ENCODE measurements at regions of chr10 and their contacts with region 1.

Region 1: GRCh38 chr10:51389415-51390321 is 309.7 kb downstream of the CSTF2T start:
- DNase-seq: peak; percentile 64
- H3K4me3 Mint-ChIP-seq: no peak overlapping the region
- H3K27ac Mint-ChIP-seq: no peak overlapping the region
- H3K4me1 Mint-ChIP-seq: peaks cover 19% of the 10 kb centered on the region
- H3K27me3 Mint-ChIP-seq: no peaks in the 10 kb centered on the region
- CTCF ChIP-seq: peak; percentile 72

Region 2: DNA sequence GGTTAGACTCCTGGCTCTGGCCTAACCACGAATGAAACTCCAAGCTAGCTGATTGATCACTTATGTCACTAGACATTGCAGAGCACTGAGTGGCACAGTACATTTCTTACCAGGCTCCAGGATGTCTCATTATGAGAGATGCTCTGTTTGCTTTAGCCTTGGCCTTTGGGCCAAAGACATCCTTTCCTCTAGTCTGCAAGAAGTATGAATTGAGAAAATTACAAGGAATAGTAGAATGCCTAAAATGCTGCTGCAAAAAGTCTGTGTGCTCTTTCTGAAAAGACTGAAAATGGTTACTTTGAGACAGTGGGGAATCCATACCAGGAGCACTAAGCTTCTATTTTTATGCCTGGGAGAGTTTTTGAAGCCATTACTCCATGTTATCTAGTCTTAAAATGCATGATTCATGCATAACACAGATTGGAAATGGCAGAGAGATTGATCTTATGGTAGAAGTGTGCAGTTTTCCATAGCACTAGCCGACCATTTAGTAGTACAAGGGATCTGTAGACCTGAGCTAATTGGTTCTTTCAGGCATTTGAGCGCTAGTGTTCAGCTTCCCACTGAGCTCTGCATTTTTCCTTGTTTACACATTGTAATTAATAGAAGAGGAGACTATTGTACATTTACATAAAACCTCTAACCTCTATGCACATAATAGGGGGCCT is 11.6 kb before region 1 on chr10:
- CTCF ChIA-PET with region 1: interaction called, 10 read pairs
- POLR2A ChIA-PET with region 1: interaction called, 13 read pairs
- intact Hi-C with region 1: no loop called
- DNase-seq: no peak
- H3K4me3 Mint-ChIP-seq: no peak overlapping the region
- H3K27ac Mint-ChIP-seq: no peak overlapping the region
- H3K4me1 Mint-ChIP-seq: no peaks in the 10 kb centered on the region
- H3K27me3 Mint-ChIP-seq: no peaks in the 10 kb centered on the region
- CTCF ChIP-seq: no peak

Region 3: GRCh38 chr10:51590802-51591201 is 201.1 kb after region 1 on chr10:
- CTCF ChIA-PET with region 1: no interaction called
- POLR2A ChIA-PET with region 1: no interaction called
- intact Hi-C with region 1: no loop called
- DNase-seq: no peak
- H3K4me3 Mint-ChIP-seq: no peak overlapping the region
- H3K27ac Mint-ChIP-seq: no peak overlapping the region
- H3K4me1 Mint-ChIP-seq: no peaks in the 10 kb centered on the region
- H3K27me3 Mint-ChIP-seq: peaks cover 22% of the 10 kb centered on the region
- CTCF ChIP-seq: no peak